ENCODE measurements at regions of chr15 and their contacts with region 1.

Region 1: DNA sequence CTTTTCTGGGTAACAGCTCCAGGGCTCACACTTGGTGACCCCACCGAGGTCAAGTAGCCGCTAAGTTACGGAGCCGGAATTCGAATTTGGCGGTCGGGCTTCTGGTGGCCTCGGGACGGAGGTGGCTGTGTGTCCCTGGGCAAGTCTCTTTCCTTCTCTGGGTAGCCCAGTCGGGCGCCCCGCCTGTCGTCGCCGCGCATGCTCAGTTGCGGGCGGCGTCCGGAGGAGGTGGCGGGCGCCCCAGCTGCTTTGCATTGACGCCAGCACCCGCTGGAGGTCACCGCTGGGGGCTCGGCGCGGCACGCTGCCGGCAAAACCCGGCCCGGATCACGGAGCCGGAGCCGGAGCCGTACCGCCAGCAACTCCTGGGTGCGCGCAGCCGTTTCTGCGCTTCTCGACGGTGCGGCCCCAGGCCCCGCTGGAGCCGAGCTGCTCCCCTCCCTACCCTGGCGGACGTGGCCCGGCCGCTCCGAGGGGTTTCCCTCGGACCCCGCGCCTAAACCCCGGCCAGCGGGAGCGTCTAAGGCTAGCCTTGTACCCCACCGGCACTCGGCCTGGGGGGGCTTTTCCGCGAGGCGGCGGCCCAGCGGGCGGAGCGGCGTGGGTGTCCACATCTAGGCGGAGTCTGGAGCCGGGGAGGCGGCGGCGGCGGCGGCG is 474 bp upstream of the PDE8A start:
- DNase-seq: peak in 9 of 10 donors; percentile 92 to 98 (median 96)
- ATAC-seq: peak; percentile 75 to 80
- H3K4me3 Mint-ChIP-seq: peak overlapping the region; percentile 88 to 97 (median 94)
- H3K27ac Mint-ChIP-seq: peak overlapping the region; percentile 84 to 98 (median 96)
- H3K4me1 Mint-ChIP-seq: peaks cover 7 to 44% (median 37%) of the 10 kb centered on the region in 4 donors
- H3K27me3 Mint-ChIP-seq: no peaks in the 10 kb centered on the region

Region 2: GRCh38 chr15:84915011-84915958 is 65.9 kb before region 1 on chr15:
- POLR2A ChIA-PET with region 1: no interaction called
- DNase-seq: no peak
- ATAC-seq: peak; percentile 61 to 79
- H3K4me3 Mint-ChIP-seq: no peak overlapping the region
- H3K27ac Mint-ChIP-seq: peak overlapping the region in 3 of 10 donors; percentile 35 to 86 (median 69)
- H3K4me1 Mint-ChIP-seq: peaks cover 0 to 10% (median 3%) of the 10 kb centered on the region in 4 donors
- H3K27me3 Mint-ChIP-seq: peaks cover 2 to 16% (median 9%) of the 10 kb centered on the region in 5 donors

Region 3: GRCh38 chr15:85000189-85000864 is 19.1 kb after region 1 on chr15:
- POLR2A ChIA-PET with region 1: no interaction called
- DNase-seq: no peak
- ATAC-seq: no peak
- H3K4me3 Mint-ChIP-seq: no peak overlapping the region
- H3K27ac Mint-ChIP-seq: no peak overlapping the region
- H3K4me1 Mint-ChIP-seq: peaks cover 19 to 56% (median 31%) of the 10 kb centered on the region in 4 donors
- H3K27me3 Mint-ChIP-seq: no peaks in the 10 kb centered on the region

Region 4: DNA sequence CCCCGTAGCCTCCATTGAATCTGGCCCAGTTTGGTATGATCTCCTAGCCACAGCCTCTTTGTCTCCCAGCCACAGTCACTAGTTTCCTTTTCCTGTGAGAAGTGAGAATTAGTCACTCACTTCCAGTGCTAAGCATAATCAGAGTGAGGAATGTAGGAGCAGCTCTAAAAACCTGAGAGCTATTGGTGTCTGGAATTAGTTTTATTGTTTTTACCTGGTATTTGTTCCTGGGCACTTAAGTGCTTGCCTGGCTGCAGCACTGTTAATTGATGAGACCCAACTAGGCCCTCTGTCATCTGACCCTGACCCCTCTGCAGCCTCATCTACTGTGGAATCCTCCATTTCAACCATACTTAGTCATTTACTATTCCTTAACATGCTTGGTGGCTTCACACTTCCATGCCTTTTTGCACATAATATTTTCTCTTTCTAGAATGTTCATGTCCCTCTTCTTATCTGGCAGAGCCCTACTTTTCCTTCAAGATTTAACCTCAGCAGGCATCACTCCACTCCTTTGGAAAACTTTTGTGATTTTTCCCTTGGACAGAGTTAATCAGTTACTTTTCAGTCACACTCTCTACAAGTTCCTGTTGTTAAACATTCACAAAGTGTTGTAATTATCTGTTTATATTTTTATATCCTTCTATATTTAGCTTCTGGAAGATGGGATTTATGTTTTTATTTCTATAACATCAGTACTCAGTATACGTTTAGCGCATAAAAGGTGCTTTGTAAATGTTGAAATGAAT is 49.3 kb after region 1 on chr15:
- POLR2A ChIA-PET with region 1: interaction called, 11 read pairs
- DNase-seq: no peak
- ATAC-seq: peak; percentile 25 to 48
- H3K4me3 Mint-ChIP-seq: peak overlapping the region in 7 of 10 donors; percentile 3 to 24 (median 10)
- H3K27ac Mint-ChIP-seq: peak overlapping the region; percentile 17 to 76 (median 36)
- H3K4me1 Mint-ChIP-seq: peaks cover 32 to 64% (median 52%) of the 10 kb centered on the region in 4 donors
- H3K27me3 Mint-ChIP-seq: no peaks in the 10 kb centered on the region

Measured in naive thymus-derived CD8-positive, alpha-beta T cell (primary cell).